ENCODE measurements at regions of chr2 and their contacts with region 1.

Region 1: DNA sequence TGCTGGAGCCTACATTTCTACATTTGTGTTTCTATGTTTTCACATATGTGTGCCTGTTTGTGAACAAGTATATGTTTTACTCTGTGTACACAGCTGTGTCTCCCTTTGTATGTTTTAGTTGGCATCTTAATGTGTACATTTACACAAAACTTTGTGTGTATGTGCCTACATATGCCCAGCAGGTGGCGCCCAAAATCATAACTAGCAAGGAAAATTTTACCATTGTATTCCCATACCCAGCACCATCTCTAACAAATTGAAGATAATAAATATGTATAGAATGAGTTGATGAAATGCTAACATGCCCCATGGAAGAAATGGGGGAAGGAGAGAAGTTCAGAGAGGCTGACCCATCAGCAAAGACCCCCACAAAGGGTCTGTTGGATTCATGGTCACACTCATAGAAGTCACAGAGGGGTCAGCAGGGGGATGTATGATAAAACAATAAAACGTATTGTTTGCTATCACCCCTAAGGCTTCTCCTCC is 48.1 kb downstream of the PKDCC start:
- DNase-seq: peak; percentile 56
- H3K4me3 ChIP-seq: no peak overlapping the region
- H3K27ac ChIP-seq: no peak overlapping the region
- H3K4me1 ChIP-seq: peaks cover 8% of the 10 kb centered on the region
- H3K27me3 ChIP-seq: no peaks in the 10 kb centered on the region
- CTCF ChIP-seq: peak; percentile 75 to 78

Region 2: DNA sequence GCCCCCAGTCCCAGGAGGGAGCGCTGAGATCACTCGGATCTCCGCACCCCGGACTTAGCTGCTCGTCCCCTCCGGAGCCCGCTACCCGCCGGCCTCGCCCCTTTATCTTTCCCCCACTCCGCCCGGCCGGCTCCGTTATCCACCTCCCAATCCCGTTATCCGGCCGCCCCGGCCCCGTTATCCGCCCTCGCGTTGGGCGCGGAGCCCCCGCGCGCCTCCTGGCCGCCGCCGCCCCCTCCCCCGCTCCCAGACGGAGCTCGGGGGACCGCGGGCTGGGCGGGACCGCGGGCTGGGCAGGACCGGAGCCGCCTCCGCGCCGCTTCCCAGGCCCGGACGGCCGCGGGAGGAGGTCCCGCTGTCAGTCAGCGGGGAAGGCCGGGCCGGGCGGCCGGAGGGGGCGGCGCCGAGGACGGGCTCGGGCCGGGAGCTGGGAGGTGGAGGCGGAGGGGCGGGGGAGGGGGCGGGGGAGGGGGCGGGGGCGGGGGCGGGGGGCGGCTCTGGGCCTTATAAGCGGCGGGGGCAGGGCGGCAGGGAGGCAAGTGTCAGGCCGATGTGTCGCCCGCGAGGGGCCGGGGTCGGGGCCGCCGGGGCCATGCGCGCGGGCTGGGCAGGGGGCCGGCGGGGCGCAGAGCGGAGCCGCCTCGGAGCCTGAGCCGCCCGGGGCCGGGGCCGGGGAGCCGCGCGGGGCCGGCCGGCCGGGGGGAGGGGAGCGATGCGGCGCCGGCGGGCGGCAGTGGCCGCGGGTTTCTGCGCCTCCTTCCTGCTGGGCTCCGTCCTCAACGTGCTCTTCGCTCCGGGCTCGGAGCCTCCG is 48.3 kb before region 1 on chr2 and contains the start of gene PKDCC:
- CTCF ChIA-PET with region 1: no interaction called
- dilution Hi-C with region 1: no loop called
- in situ Hi-C with region 1: no loop called
- intact Hi-C with region 1: no loop called
- DNase-seq: peak; percentile 28
- H3K4me3 ChIP-seq: peak within 1 kb of the TSS in 2 of 3 experiments; percentile 11
- H3K27ac ChIP-seq: no peak within 1 kb of the TSS
- H3K4me1 ChIP-seq: peaks cover 6% of the 10 kb centered on the region
- H3K27me3 ChIP-seq: peaks cover 26% of the 10 kb centered on the region
- CTCF ChIP-seq: no peak
- total RNA-seq, gene PKDCC: 0.17 TPM in 1 of 2 donors, not detected in the other

Region 3: DNA sequence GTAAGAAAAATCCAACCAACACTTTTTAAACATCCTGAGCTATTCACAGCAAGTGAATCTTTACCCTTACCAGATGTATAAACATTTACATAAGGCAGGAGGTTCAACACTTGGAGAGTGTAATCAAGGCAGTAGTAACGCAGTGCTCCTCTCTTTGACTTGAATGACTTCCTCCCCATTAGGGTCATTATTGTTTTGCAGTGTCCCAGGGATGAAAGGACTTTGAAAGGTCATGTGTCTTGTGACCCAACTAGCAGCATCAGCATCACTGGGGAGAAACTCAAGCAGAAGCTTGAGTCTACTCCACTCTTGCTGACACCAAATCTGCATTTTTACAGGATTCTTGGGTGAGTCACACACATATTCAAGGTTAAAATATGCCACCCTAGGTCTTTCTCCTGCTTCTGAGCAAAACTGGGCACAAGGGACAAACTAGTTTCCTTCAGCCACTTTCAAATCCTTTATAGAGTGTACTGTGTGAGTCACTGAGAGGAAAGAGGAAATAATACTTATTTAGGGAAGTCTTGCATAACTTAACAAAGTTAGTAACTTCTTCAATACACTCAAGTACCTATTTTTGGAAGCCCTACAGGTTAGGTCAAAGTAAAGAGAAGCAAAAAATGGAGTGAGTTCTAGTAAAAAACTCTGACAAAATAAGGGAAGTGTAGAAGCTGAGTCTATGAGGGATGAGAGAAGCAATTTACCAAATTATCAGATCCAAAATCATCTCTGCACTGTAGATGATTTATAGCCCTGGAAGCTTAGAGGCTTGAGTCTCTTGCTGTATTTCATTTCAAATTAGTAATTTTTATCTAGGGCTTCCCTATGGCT is 22.2 kb after region 1 on chr2:
- CTCF ChIA-PET with region 1: no interaction called
- dilution Hi-C with region 1: no loop called
- in situ Hi-C with region 1: no loop called
- intact Hi-C with region 1: no loop called
- DNase-seq: peak; percentile 46
- H3K4me3 ChIP-seq: no peak overlapping the region
- H3K27ac ChIP-seq: no peak overlapping the region
- H3K4me1 ChIP-seq: peaks cover 13% of the 10 kb centered on the region
- H3K27me3 ChIP-seq: no peaks in the 10 kb centered on the region
- CTCF ChIP-seq: no peak

Region 4: DNA sequence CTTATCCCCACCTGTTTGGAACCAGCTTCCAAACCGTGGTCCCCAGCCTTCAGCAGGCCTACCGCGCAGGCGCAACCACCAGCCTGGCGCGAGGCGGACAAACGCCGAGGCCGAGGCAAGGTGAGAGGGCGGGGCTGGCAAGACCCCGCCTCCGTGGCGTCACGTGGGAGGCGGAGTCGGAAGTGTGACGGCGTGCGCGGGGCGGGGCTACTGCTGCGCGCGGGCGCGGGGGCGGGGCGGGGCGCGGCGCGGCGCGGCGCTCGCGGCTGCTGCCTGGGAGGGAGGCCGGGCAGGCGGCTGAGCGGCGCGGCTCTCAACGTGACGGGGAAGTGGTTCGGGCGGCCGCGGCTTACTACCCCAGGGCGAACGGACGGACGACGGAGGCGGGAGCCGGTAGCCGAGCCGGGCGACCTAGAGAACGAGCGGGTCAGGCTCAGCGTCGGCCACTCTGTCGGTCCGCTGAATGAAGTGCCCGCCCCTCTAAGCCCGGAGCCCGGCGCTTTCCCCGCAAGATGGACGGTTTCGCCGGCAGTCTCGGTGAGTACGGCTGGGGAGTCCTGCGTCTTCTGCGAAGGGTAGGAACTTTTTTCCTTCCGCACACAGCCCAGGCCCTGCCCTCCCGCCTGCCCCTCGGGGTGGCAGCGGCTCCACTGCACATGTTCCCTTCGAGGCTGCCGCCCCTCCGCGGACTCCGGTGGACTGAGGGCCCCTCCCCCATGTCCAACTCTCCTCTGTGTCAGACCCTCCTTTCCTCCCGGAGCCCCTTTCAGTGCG is 73.3 kb after region 1 on chr2 and contains the start of gene EML4:
- CTCF ChIA-PET with region 1: no interaction called
- dilution Hi-C with region 1: no loop called
- in situ Hi-C with region 1: no loop called
- intact Hi-C with region 1: loop called (anchors 1 kb)
- DNase-seq: peak; percentile 77
- H3K4me3 ChIP-seq: peak within 1 kb of the TSS; percentile 66 to 88 (median 69)
- H3K27ac ChIP-seq: peak within 1 kb of the TSS; percentile 74
- H3K4me1 ChIP-seq: peaks cover 22% of the 10 kb centered on the region
- H3K27me3 ChIP-seq: no peaks in the 10 kb centered on the region
- CTCF ChIP-seq: no peak
- total RNA-seq, gene EML4: 32.0 to 32.2 TPM

Region 5: GRCh38 chr2:42196403-42197267 is 100.7 kb after region 1 on chr2:
- CTCF ChIA-PET with region 1: no interaction called
- dilution Hi-C with region 1: no loop called
- in situ Hi-C with region 1: no loop called
- intact Hi-C with region 1: loop called (anchors 1 kb)
- DNase-seq: peak; percentile 35
- H3K4me3 ChIP-seq: no peak overlapping the region
- H3K27ac ChIP-seq: no peak overlapping the region
- H3K4me1 ChIP-seq: no peaks in the 10 kb centered on the region
- H3K27me3 ChIP-seq: no peaks in the 10 kb centered on the region
- CTCF ChIP-seq: peak in 1 of 2 donors; percentile 50

Region 6: DNA sequence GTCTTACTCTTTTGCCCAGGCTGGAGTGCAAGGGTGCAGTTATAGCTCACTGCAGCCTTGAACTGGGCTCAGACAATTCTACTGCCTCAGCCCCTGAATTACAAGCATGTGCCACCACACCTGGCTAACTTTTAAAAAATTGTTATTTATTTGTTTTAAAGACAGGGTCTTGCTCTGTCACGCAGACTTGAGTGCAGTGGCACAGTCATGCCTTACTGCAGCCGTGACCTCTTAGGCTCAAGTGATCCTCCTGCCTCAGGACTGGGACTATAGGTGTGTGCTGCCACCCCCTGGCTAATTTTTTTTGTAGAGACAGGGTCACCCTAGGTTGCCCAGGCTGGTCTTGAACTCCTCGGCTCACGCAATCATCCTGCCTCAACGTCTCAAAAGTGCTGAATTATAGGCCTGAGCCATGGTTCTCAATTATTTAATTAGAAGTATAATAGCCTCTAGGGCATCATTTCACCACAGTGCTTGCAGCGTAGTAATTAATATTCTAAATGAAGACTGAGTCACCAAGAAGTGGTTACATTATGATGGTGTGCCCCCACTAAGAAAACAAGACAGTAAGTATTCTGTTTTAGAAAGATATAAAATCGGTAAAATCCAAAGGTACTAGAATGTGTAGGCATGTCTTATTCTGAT is 142.8 kb after region 1 on chr2:
- CTCF ChIA-PET with region 1: interaction called, 3 read pairs
- dilution Hi-C with region 1: no loop called
- in situ Hi-C with region 1: loop called (anchors 5 to 10 kb)
- intact Hi-C with region 1: loop called (anchors 1 kb)
- DNase-seq: peak; percentile 23
- H3K4me3 ChIP-seq: peak overlapping the region in 1 of 3 experiments; percentile 11
- H3K27ac ChIP-seq: no peak overlapping the region
- H3K4me1 ChIP-seq: peaks cover 13% of the 10 kb centered on the region
- H3K27me3 ChIP-seq: no peaks in the 10 kb centered on the region
- CTCF ChIP-seq: peak; percentile 29 to 63

Region 7: DNA sequence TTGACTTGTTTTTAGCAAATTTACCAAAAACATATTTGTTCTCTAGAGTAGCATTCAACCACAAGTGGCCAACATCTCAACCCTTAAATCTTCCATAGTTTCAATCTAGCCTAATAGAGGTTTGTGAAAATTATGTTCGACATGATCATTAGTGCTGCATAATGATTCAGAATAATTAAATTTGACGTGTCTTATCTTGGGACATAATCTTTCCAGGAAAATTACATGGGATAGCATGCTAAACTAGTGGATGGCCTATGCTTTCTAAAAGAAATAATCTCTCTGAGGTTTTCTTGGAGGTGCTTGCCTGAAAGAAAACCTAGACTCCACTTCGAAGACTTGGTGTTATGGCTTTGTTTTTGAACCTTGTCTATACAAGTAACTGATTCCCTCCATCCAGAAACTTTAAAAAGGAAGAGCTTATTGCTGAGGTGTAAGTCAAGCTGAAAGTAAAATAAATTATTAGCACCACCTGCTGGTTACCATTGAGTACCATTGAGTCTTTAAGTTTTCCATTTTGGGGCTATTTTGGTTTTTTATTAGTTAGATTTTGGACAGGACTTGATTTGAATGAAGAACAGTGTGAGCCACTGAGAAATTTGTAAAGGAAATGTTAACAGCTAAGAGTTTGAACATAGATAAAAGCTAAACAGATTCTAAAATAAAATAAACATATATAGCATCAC is 232.3 kb after region 1 on chr2:
- CTCF ChIA-PET with region 1: interaction called, 5 read pairs
- dilution Hi-C with region 1: no loop called
- in situ Hi-C with region 1: loop called (anchors 10 to 25 kb)
- intact Hi-C with region 1: loop called (anchors 1 kb)
- DNase-seq: peak; percentile 6
- H3K4me3 ChIP-seq: no peak overlapping the region
- H3K27ac ChIP-seq: no peak overlapping the region
- H3K4me1 ChIP-seq: no peaks in the 10 kb centered on the region
- H3K27me3 ChIP-seq: no peaks in the 10 kb centered on the region
- CTCF ChIP-seq: peak; percentile 42 to 49

Region 8: GRCh38 chr2:42360890-42361727 is 265.1 kb after region 1 on chr2 and contains the start of gene COX7A2L:
- CTCF ChIA-PET with region 1: no interaction called
- dilution Hi-C with region 1: no loop called
- in situ Hi-C with region 1: no loop called
- intact Hi-C with region 1: loop called (anchors 1 kb)
- DNase-seq: peak; percentile 95
- H3K4me3 ChIP-seq: peak within 1 kb of the TSS; percentile 79 to 99 (median 95)
- H3K27ac ChIP-seq: peak within 1 kb of the TSS; percentile 94
- H3K4me1 ChIP-seq: peaks cover 4% of the 10 kb centered on the region
- H3K27me3 ChIP-seq: no peaks in the 10 kb centered on the region
- CTCF ChIP-seq: peak in 1 of 2 donors; percentile 48
- total RNA-seq, gene COX7A2L: 129 to 238 TPM

Region 9: GRCh38 chr2:42494355-42495233 is 398.6 kb after region 1 on chr2:
- CTCF ChIA-PET with region 1: no interaction called
- dilution Hi-C with region 1: no loop called
- in situ Hi-C with region 1: no loop called
- intact Hi-C with region 1: loop called (anchors 10 kb)
- DNase-seq: peak; percentile 87
- H3K4me3 ChIP-seq: peak overlapping the region; percentile 49 to 62 (median 50)
- H3K27ac ChIP-seq: no peak overlapping the region
- H3K4me1 ChIP-seq: peaks cover 13% of the 10 kb centered on the region
- H3K27me3 ChIP-seq: peaks cover 29% of the 10 kb centered on the region
- CTCF ChIP-seq: peak; percentile 87 to 91

Region 10: DNA sequence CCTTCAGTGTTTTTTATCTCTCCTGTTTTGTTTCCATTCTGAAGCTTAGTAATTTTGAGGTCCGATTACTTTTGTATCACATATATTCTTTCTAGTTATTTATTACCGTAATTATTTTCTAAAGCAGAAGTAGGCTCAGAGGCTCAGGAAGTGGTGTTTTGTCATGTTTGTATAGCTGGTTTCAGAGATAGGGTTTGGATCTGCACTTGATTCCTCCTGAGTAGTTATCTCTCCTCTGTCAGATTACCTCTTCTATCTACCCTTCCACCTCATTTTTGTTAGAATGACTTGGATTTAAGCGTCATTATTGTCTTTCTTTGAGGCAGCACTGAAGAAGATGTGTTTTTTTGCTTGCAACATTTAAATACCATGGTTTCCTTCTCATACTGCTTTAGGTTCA is 567.9 kb after region 1 on chr2:
- CTCF ChIA-PET with region 1: no interaction called
- dilution Hi-C with region 1: no loop called
- in situ Hi-C with region 1: no loop called
- intact Hi-C with region 1: no loop called
- DNase-seq: no peak
- H3K4me3 ChIP-seq: no peak overlapping the region
- H3K27ac ChIP-seq: no peak overlapping the region
- H3K4me1 ChIP-seq: no peaks in the 10 kb centered on the region
- H3K27me3 ChIP-seq: no peaks in the 10 kb centered on the region
- CTCF ChIP-seq: no peak